Posterior cingulate gyrus (tissue), 11 donors: ENCODE measurements at regions of chr1 and their contacts with region 1.

Region 1: DNA sequence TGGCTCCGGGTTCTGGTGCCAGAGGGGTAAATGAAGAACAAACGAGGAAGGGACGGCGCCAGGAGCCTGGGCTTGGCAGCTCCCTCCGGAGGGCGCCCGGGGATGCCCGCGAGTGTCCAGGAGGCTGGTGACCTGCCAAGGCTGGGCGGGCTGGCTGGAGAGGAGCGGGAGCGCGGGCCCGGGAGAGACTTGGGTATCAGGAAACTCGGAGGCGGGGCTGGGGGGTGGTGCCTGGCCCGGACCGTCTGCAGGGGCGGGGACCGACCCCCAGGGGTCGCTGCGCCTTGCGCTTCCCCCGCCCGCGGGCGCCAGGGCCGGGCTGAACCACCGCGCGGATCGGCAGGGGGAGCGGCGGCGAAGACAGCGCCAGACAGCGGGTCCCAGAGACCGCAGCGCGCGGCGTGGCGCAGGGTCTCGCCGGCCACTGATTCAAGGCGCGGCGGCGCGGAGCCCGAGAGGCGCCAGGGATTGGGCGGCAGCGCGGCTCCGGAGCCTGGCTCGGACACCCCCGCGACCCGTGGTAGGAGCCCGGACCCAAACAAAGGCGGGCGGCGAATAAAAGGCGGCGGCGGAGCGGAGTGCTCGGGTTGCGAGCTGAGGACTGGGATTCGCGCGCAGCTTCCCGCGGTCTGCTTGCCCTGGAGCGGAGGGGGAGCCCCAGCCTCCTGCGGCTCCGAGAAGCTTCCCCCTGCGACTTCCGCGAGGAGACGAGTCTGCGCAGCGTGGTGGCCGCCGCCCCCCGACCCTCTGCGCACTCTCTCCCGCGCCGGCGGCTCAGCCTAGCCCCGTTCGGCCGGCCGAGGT is at the start of gene DISP3:
- DNase-seq: peak; percentile 60 to 97 (median 86)

Region 2: DNA sequence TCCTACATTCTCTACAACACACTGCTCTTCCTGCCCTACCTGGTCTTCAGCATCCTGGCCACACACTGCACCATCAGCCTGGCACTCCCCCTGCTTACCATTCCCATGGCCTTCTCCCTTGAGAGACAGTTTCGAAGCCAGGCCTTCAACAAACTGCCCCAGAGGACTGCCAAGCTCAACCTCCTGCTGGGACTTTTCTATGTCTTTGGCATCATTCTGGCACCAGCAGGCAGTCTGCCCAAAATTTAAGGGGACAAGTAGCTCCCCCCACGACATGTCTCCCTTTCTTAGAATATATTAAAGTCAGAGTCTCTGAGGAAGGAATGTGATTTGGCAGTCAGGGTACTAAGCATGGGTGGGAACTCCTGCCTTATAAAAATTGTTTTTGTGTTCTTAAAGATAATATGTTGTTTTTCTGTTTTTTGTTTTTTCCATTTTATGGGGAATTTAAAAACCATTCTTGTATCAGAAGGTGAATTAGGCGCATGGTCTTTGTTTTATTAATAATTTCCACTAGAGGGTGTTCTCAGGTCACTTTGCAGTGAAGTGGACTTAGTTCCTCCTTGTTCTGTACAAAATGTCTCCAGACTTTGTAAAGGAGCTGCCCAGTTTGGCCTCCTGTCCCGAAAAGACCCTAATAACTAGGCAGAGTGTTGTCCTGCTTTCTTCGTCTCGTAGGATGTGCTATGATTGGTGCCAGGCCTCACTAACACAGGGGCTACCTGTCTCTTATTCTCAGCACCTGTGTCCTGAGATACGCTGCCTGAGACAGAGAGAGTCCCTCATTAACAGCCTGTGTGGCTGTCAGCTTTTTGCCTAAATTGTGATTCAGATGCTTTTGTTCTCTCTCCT is 192.7 kb before region 1 on chr1:
- intact Hi-C with region 1: loop called (anchors 10 kb)
- DNase-seq: peak in 1 of 10 donors; percentile 14